K562 (cell line): ENCODE measurements at regions of chr12 and their contacts with region 1.

Region 1: GRCh38 chr12:64571411-64571810 is 38.9 kb upstream of the RASSF3 start:
- DNase-seq: no peak
- ATAC-seq: no peak
- H3K4me3 ChIP-seq: no peak overlapping the region
- H3K27ac ChIP-seq: no peak overlapping the region
- H3K4me1 ChIP-seq: peaks cover 0 to 14% of the 10 kb centered on the region in 2 experiments; a peak in 3 of 5 replicates
- H3K27me3 ChIP-seq: no peaks in the 10 kb centered on the region
- CTCF ChIP-seq: no peak
- EP300 ChIP-seq: no peak
- POLR2A ChIP-seq: no peak
- RAD21 ChIP-seq: no peak

Region 2: GRCh38 chr12:64560396-64561304 is 10.8 kb before region 1 on chr12:
- CTCF ChIA-PET with region 1: no interaction called
- POLR2A ChIA-PET with region 1: interaction called, 11 read pairs
- in situ Hi-C with region 1: no loop called
- intact Hi-C with region 1: no loop called
- DNase-seq: peak in 1 of 4 experiments; percentile 14
- ATAC-seq: peak; percentile 55
- H3K4me3 ChIP-seq: no peak overlapping the region
- H3K27ac ChIP-seq: no peak overlapping the region
- H3K4me1 ChIP-seq: no peaks in the 10 kb centered on the region
- H3K27me3 ChIP-seq: peaks cover 15 to 30% of the 10 kb centered on the region in 2 experiments; a peak in 4 of 5 replicates
- CTCF ChIP-seq: no peak
- EP300 ChIP-seq: no peak
- POLR2A ChIP-seq: no peak
- RAD21 ChIP-seq: no peak